ENCODE measurements at regions of chr12 and their contacts with region 1.

Region 1: DNA sequence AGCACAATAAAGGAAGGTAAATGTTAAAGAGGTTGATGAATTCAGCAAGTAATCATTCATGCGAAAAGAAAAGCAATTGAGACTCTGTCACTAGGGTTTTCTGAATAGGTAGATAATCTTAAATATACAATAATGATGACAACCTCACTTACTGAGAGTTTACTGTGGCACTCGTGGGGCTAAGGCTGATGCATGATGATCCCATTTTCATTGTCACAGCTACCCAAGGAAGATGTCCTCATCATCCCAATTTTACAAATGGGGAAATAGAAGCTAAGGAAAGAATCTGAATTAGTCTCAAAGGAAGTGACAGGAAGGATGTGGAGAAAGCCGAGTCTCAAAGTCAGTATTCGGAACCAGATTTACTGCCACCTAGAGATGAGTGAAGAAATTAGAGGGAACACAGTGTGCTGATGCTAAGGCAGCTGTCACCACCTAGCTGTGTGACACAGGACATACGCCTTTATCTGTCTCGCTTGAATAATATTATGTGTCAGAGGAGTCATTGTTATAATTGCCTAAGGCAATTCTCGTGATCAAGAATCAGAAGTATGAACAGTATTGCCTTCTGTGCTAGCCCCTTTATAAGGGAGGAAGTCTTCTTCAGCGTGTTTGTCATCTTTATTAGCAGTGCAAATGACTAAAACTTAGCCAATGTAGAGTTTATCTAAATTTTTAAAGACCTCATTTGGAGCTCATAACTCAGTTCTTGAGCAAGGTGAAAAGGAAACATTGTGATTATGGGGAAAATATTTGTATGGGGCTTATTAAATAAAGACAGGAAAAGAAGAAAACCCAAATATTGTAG is 63.2 kb downstream of the ERGIC2 start:
- DNase-seq: peak in 41 of 42 donors; percentile 30 to 91 (median 69)

Region 2: DNA sequence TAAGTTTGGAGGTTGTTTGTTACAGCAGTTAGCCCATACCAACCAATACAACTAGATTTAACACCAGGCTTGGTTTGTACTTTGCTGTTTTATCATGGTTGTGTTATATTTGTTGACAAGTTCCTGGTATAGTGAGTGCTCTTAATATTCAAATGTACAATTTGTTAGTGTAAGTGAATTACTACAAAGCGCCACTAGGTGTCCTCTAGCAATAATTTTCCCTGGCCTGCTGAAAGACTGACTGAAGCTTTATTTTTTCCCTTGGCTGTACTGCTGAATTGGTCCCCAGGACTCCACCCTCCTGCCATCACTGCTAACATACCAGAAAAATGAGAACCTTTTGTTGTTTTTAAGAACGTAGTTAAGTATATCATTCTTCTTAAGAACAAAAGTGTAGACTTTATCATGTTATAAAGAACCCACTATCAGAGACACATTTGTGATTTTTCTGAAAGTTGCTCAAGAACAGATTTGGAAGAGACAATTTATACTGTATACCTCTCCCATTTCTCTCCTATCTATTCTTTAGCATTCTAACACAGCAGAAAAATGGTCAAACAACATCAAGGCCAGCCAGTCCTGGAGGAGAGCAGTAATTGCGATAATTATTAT is 244.0 kb before region 1 on chr12:
- intact Hi-C with region 1: loop called (anchors 5 kb)
- DNase-seq: peak in 24 of 42 donors; percentile 13 to 74 (median 40)